Activated naive CD4-positive, alpha-beta T cell treated with anti-CD3 and anti-CD28 coated beads for 36 hours (primary cell): ENCODE measurements at regions of chr5 and their contacts with region 1.

Region 1: GRCh38 chr5:159240301-159240870 is 22.7 kb upstream of the UBLCP1 start:
- DNase-seq: peak; percentile 24
- H3K4me3 Mint-ChIP-seq: no peak overlapping the region
- H3K27ac Mint-ChIP-seq: peak overlapping the region; percentile 55
- H3K4me1 Mint-ChIP-seq: peaks cover 44% of the 10 kb centered on the region
- H3K27me3 Mint-ChIP-seq: no peaks in the 10 kb centered on the region

Region 2: DNA sequence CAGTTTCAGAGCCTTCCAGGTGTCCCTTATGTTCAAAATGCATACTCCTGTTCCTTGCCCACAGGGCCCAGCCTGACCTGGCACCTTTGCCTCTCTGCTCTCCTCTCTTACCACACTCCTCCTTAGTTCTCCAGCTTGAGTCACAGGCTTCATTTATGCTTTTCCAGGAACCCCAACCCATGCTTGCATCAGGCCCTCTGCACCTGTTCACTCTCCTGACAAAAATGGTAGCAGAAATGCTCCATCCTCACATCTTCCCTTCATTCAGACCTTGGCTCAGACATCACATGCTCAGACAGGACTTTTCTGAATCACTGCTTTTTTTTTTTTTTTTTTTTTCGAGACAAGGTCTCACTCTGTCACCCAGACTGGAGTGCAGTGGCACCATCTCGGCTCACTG is 15.9 kb before region 1 on chr5:
- CTCF ChIA-PET with region 1: interaction called, 3 read pairs
- intact Hi-C with region 1: loop called (anchors 2 kb)
- DNase-seq: no peak
- H3K4me3 Mint-ChIP-seq: no peak overlapping the region
- H3K27ac Mint-ChIP-seq: no peak overlapping the region
- H3K4me1 Mint-ChIP-seq: no peaks in the 10 kb centered on the region
- H3K27me3 Mint-ChIP-seq: no peaks in the 10 kb centered on the region

Region 3: DNA sequence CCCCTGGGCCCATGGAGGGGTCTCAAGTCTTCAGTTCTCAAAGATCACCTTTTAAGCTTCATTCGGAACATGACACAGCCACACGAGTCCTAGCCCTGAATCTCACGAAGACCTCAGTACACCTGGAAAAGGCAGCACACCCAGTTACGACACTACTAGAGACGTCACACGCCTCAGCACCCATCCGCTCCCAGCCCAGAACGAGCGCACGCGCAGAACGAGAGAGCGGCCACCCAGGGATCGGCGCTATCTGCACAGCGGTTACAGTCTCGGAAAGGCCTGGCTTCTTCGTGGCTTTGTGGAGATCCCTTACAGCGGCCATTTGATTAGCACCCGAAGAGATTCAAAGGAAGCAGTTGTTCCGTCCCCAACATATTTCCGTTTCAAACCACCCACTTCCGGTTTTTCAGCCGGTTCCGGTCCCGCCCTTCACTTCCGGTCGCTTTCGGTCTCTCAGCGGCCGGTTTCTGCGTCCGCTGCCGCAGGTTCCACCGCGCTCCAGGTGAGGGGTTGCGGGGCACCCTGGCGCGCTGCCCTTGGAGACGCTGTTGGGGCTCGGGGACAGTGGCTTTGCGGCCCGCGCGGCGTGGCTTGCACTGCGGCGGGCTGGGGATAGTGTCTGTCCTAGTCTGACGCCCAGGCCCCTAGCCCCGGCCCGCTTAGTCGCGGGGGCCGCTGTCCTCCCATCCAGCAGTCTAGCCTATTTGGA is 22.6 kb after region 1 on chr5 and contains the start of gene UBLCP1:
- CTCF ChIA-PET with region 1: interaction called, 3 read pairs
- intact Hi-C with region 1: loop called (anchors 1 kb)
- DNase-seq: peak; percentile 82
- H3K4me3 Mint-ChIP-seq: peak within 1 kb of the TSS; percentile 96
- H3K27ac Mint-ChIP-seq: peak within 1 kb of the TSS; percentile 99
- H3K4me1 Mint-ChIP-seq: peaks cover 29% of the 10 kb centered on the region
- H3K27me3 Mint-ChIP-seq: no peaks in the 10 kb centered on the region
- total RNA-seq, gene UBLCP1: 22.7 to 23.0 TPM